ENCODE measurements at regions of chr1 and their contacts with region 1.

Region 1: GRCh38 chr1:84143796-84144565 is at the start of gene PRKACB:
- DNase-seq: peak; percentile 63
- ATAC-seq: peak; percentile 70
- H3K4me3 ChIP-seq: no peak within 1 kb of the TSS; the same call in 1 of the 2 replicates
- H3K27ac ChIP-seq: peak within 1 kb of the TSS; percentile 77
- H3K4me1 ChIP-seq: peaks cover 39% of the 10 kb centered on the region
- H3K27me3 ChIP-seq: no peaks in the 10 kb centered on the region
- CTCF ChIP-seq: no peak
- total RNA-seq, gene PRKACB: 7.8 and 8.3 TPM in 2 replicates

Region 2: GRCh38 chr1:83931658-83932253 is 212.2 kb before region 1 on chr1:
- CTCF ChIA-PET with region 1: no interaction called
- POLR2A ChIA-PET with region 1: no interaction called
- intact Hi-C with region 1: no loop called
- DNase-seq: peak; percentile 67
- ATAC-seq: peak; percentile 73
- H3K4me3 ChIP-seq: no peak overlapping the region
- H3K27ac ChIP-seq: no peak overlapping the region
- H3K4me1 ChIP-seq: no peaks in the 10 kb centered on the region
- H3K27me3 ChIP-seq: no peaks in the 10 kb centered on the region
- CTCF ChIP-seq: peak; percentile 87

Region 3: DNA sequence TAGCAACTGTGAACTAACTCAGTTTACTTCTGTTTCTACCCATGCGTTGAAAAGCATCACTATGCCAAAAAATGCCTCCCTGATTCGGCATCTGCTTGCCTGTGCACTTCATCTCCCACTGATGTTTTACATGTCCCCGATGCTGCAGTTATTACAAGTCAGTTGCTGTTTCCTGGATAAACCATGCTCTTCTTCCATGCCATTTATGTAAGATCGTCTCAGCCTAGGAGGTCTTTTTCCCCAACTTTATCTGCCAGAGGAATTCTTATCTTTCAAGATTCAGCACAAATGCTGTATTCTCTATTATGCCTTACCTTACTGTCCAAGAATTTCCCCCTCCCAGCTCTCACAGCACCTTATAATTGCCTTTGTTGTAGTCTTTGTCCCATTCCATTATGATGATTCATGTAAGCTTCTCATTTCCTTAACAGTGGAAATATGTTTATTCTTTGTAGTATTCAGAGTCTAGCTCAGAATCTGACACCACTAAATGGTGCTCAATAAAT is 30.1 kb after region 1 on chr1:
- CTCF ChIA-PET with region 1: no interaction called
- POLR2A ChIA-PET with region 1: no interaction called
- intact Hi-C with region 1: loop called (anchors 1 kb)
- DNase-seq: peak; percentile 85
- ATAC-seq: peak; percentile 99
- H3K4me3 ChIP-seq: no peak overlapping the region
- H3K27ac ChIP-seq: peak overlapping the region; percentile 31
- H3K4me1 ChIP-seq: peaks cover 11% of the 10 kb centered on the region
- H3K27me3 ChIP-seq: no peaks in the 10 kb centered on the region
- CTCF ChIP-seq: no peak

Region 4: GRCh38 chr1:84271441-84272151 is 127.6 kb after region 1 on chr1:
- CTCF ChIA-PET with region 1: no interaction called
- POLR2A ChIA-PET with region 1: no interaction called
- intact Hi-C with region 1: loop called (anchors 1 kb)
- DNase-seq: peak; percentile 17
- ATAC-seq: peak; percentile 34
- H3K4me3 ChIP-seq: no peak overlapping the region
- H3K27ac ChIP-seq: peak overlapping the region; percentile 79
- H3K4me1 ChIP-seq: peaks cover 23% of the 10 kb centered on the region
- H3K27me3 ChIP-seq: no peaks in the 10 kb centered on the region
- CTCF ChIP-seq: no peak

Region 5: DNA sequence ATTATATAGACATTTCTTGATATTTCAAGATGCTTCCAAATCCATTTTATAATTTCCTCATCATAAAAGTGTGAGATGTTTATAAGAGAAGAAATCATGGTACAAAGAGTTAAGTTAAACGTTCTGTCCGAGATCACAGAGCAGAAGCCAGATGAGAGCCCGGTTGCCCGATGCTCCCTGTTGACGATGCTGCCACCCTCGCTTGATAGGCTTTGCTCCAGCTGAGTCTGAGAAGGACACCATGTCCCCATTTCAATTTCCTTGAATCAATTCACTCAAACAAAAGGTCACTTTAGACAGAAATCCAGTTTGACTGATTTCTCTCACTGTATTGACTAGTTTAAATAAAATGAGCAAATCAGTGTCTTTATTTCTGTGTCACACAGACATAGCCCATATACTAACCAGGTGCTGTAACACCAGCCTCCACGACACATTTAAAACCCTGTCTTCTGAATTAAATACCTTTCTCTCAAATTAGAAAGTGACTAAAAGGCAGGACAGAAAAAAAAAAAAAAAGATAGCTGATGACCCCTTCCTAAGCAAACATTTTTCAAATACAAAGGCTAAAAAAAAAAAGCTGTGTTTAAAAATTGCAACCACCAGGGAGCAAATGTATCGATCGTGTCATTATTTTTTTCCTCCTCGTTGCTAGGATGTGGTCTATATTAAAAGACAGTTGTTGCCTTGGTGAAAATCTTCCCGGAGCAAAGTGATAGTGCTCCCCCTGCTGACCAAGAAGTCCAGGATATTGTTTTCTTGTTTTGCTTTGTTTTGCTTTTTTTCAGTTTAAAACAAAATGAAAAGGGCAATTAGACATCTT is 289.5 kb after region 1 on chr1:
- CTCF ChIA-PET with region 1: interaction called, 4 read pairs
- POLR2A ChIA-PET with region 1: interaction called, 7 read pairs
- intact Hi-C with region 1: loop called (anchors 1 kb)
- DNase-seq: peak; percentile 82
- ATAC-seq: peak; percentile 75
- H3K4me3 ChIP-seq: peak overlapping the region; percentile 57
- H3K27ac ChIP-seq: peak overlapping the region; percentile 38
- H3K4me1 ChIP-seq: peaks cover 22% of the 10 kb centered on the region
- H3K27me3 ChIP-seq: no peaks in the 10 kb centered on the region
- CTCF ChIP-seq: peak; percentile 91

Region 6: DNA sequence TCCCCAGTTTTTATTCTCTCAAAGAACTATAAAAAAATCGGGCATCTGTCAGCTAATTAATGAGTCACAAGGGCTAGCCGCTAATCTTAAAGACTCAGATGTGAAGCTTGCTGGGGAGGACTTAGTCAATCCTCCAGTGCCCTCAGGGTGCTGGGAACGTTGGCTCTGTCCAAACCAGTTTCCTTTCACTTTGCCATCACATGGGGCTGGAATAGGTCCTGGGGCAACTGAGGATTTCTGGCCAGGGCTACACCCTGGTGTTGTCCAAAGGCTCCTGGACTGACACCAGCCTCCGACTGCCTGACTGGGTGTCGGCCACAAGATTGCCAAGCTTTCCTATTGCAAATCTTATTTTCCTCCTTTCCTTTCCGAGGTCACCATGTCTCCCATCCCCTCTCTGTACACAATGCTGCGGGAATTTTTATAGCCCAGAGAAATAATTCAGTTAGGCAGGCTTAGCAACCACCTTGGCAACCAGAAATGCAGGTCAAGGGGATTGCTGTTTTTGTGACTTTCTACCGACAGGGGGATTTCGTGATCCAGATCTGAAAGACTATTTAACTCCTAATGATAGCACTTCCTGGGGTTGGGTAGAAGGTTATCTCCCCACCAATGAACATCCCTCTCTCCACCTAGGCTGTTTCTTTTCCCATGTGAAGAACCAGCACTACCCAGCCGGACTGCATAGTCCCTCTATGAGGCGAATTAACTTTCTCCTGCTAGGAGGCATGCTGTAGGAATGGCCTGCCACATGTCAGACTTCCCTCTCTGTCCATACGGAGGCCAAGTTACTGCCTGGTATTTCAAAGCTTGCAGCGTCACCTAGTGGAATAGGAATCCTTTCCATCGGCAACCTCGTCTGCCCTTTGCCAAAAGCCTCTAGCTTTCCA is 460.2 kb after region 1 on chr1:
- CTCF ChIA-PET with region 1: no interaction called
- POLR2A ChIA-PET with region 1: interaction called, 6 read pairs
- intact Hi-C with region 1: loop called (anchors 1 kb)
- DNase-seq: peak; percentile 97
- ATAC-seq: peak; percentile 77
- H3K4me3 ChIP-seq: peak overlapping the region; percentile 63
- H3K27ac ChIP-seq: peak overlapping the region; percentile 92
- H3K4me1 ChIP-seq: peaks cover 27% of the 10 kb centered on the region
- H3K27me3 ChIP-seq: no peaks in the 10 kb centered on the region
- CTCF ChIP-seq: peak; percentile 88

Region 7: DNA sequence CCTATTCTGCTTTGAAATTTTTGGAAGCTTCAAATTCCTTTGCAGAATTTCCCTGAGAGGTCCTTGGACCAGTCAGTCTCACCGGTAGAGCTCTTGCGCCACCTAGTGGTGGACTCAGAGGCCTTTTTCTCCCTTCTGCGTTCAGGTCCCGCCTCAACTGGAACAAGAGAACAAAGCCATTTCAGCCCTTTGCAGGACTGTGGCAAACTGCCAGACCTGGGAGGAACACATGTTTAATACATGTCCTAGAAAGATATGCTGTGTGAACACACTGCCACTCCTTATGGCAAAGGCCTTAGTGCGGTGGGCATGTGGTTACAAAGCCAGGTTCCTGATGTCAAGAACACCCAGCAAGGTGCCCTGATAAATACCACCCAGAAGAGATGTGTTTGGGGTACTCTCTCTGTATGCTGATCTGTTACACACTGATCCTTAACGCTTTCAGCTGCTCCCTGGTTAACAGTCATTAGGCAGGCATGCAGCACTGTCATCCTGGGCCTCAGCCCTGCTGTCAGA is 628.5 kb after region 1 on chr1:
- CTCF ChIA-PET with region 1: interaction called, 3 read pairs
- POLR2A ChIA-PET with region 1: no interaction called
- intact Hi-C with region 1: loop called (anchors 5 kb)
- DNase-seq: peak; percentile 92
- ATAC-seq: peak; percentile 31
- H3K4me3 ChIP-seq: no peak overlapping the region
- H3K27ac ChIP-seq: peak overlapping the region; percentile 99
- H3K4me1 ChIP-seq: peaks cover 49% of the 10 kb centered on the region
- H3K27me3 ChIP-seq: no peaks in the 10 kb centered on the region
- CTCF ChIP-seq: peak; percentile 93

Measured in PC-3 (cell line).